ENCODE measurements at regions of chr9 and their contacts with region 1.

Region 1: DNA sequence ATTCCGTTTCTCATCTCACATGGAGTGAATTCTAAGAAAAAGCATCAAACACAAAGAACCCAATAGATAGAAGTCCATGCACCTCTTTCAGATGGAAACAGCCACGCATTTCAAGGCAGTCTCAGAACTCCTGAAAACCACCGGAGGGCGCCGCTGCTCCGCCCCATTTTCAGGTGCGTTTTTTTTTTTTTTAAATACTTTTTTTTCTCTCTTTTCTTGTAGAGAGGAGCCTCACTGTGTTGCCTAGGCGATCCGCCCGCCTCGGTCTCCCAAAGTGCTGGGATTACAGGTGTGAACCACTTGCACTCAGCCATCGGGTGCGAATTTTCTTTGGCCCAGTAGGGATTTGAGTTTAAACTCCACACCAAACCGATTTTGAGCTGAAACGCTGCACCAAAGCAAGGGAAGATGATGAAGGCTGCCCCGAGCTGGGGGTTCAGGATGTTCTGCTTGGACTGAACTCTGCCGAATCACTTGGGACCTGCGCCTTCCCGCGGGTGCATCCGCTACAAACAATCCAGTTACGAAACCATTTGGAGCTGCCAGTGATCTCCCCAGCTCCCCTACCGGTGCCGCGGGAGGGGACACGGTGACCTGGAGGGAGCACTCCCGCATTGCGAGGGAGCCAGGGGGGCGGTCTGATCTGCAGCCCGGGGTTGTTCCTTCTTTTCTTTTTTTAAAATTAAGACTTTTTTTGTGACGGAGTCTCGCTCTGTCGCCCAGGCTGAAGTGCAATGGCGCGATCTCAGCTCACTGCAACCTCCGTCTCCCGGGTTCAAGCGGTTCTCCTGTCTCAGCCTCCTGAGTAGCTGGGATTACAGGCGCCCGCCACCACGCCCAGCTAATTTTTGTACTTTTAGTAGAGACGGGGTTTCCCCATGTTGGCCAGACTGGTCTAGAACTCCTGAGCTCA is 1.4 kb downstream of the PTGR1 start:
- DNase-seq: peak; percentile 66 to 73
- H3K4me3 ChIP-seq: peak overlapping the region; percentile 96
- H3K27ac ChIP-seq: peak overlapping the region; percentile 100
- H3K4me1 ChIP-seq: peaks cover 51% of the 10 kb centered on the region
- H3K27me3 ChIP-seq: no peaks in the 10 kb centered on the region
- CTCF ChIP-seq: peak; percentile 81

Region 2: GRCh38 chr9:111212874-111213273 is 385.2 kb before region 1 on chr9:
- CTCF ChIA-PET with region 1: no interaction called
- POLR2A ChIA-PET with region 1: no interaction called
- intact Hi-C with region 1: no loop called
- DNase-seq: no peak
- H3K4me3 ChIP-seq: no peak overlapping the region
- H3K27ac ChIP-seq: no peak overlapping the region
- H3K4me1 ChIP-seq: no peaks in the 10 kb centered on the region
- H3K27me3 ChIP-seq: no peaks in the 10 kb centered on the region
- CTCF ChIP-seq: no peak

Region 3: DNA sequence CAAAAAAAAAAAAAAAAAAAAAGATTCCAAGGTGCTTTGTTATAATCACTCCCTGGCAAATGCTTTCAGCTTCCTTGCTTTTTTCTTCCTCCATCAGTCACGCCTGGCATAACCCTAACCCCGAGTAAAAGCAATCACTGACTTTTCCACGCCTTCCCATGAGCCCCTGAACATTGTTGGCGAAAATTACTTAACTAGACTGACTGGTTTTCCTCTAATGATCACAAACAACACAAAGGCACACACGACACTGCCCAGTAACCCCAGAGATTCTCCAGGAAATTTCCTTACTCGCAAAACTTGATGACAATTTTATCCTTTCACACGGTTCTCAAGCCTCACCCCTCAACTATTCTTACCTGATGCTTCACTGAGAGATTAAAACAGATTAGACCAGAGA is 12.8 kb after region 1 on chr9:
- CTCF ChIA-PET with region 1: interaction called, 11 read pairs
- POLR2A ChIA-PET with region 1: interaction called, 5 read pairs
- intact Hi-C with region 1: loop called (anchors 1 kb)
- DNase-seq: peak in 1 of 2 experiments; percentile 88
- H3K4me3 ChIP-seq: no peak overlapping the region
- H3K27ac ChIP-seq: peak overlapping the region; percentile 74
- H3K4me1 ChIP-seq: peaks cover 21% of the 10 kb centered on the region
- H3K27me3 ChIP-seq: no peaks in the 10 kb centered on the region
- CTCF ChIP-seq: no peak

Region 4: GRCh38 chr9:111631071-111631971 is 33.2 kb after region 1 on chr9 and contains the start of gene DNAJC25:
- CTCF ChIA-PET with region 1: no interaction called
- POLR2A ChIA-PET with region 1: interaction called, 3 read pairs
- intact Hi-C with region 1: loop called (anchors 1 kb)
- DNase-seq: peak; percentile 97 to 99
- H3K4me3 ChIP-seq: peak within 1 kb of the TSS; percentile 73
- H3K27ac ChIP-seq: peak within 1 kb of the TSS; percentile 63
- H3K4me1 ChIP-seq: peaks cover 23% of the 10 kb centered on the region
- H3K27me3 ChIP-seq: no peaks in the 10 kb centered on the region
- CTCF ChIP-seq: no peak
- total RNA-seq, gene DNAJC25: 7.3 and 7.9 TPM in 2 replicates

Region 5: GRCh38 chr9:111691672-111692329 is 93.7 kb after region 1 on chr9:
- CTCF ChIA-PET with region 1: no interaction called
- POLR2A ChIA-PET with region 1: no interaction called
- intact Hi-C with region 1: loop called (anchors 1 kb)
- DNase-seq: peak in 1 of 2 experiments; percentile 45
- H3K4me3 ChIP-seq: no peak overlapping the region
- H3K27ac ChIP-seq: no peak overlapping the region
- H3K4me1 ChIP-seq: no peaks in the 10 kb centered on the region
- H3K27me3 ChIP-seq: no peaks in the 10 kb centered on the region
- CTCF ChIP-seq: peak; percentile 63

Region 6: DNA sequence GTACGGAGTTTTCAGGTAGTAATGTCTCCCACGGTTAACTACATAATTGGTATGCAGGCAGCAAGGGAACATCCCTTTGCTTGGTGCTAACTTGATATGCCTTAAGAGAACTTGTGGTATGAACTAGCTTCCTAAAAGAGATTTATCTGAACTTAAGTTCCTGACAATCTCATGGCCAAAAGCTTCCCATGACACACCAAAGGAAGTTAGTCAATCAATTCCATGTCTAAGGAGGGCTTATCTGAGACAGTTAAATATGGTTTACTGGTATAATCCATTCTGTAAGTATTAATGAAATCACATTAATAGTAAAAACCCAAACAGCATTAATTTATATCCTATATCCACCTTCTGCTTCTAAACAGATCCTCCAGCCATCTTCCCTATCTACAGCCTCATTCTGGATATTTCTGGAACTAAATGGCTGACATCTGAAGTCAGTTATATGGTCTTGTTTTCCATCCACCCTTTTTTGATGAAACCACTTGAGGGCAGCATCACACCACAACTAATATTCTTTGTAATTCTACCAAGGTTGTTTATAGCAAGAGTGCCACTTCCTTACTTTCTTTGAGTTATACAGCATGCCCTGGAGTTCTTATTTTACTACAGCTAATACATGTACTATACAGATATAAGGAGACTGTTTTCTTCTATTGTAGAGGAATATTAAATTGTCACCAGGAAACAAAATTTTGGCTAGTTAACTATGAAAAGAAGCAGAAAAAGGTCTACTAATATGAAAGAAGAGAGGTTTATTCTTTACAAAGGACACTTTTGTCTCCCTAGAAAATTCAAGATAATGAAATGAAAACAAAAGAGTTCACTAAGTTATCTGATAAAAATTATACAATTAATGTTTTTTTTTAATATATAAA is 161.9 kb after region 1 on chr9:
- CTCF ChIA-PET with region 1: no interaction called
- POLR2A ChIA-PET with region 1: interaction called, 9 read pairs
- intact Hi-C with region 1: loop called (anchors 1 kb)
- DNase-seq: peak; percentile 53 to 73
- H3K4me3 ChIP-seq: no peak overlapping the region
- H3K27ac ChIP-seq: no peak overlapping the region
- H3K4me1 ChIP-seq: peaks cover 6% of the 10 kb centered on the region; the same call in 1 of the 2 replicates
- H3K27me3 ChIP-seq: no peaks in the 10 kb centered on the region
- CTCF ChIP-seq: peak; percentile 81

Region 7: GRCh38 chr9:111926421-111926875 is 328.4 kb after region 1 on chr9:
- CTCF ChIA-PET with region 1: interaction called, 10 read pairs
- POLR2A ChIA-PET with region 1: no interaction called
- intact Hi-C with region 1: loop called (anchors 10 kb)
- DNase-seq: no peak
- H3K4me3 ChIP-seq: no peak overlapping the region
- H3K27ac ChIP-seq: no peak overlapping the region
- H3K4me1 ChIP-seq: no peaks in the 10 kb centered on the region; the same call in 1 of the 2 replicates
- H3K27me3 ChIP-seq: no peaks in the 10 kb centered on the region
- CTCF ChIP-seq: no peak